Vagina (tissue), 2 donors: ENCODE measurements at regions of chr19 and their contacts with region 1.

Region 1: DNA sequence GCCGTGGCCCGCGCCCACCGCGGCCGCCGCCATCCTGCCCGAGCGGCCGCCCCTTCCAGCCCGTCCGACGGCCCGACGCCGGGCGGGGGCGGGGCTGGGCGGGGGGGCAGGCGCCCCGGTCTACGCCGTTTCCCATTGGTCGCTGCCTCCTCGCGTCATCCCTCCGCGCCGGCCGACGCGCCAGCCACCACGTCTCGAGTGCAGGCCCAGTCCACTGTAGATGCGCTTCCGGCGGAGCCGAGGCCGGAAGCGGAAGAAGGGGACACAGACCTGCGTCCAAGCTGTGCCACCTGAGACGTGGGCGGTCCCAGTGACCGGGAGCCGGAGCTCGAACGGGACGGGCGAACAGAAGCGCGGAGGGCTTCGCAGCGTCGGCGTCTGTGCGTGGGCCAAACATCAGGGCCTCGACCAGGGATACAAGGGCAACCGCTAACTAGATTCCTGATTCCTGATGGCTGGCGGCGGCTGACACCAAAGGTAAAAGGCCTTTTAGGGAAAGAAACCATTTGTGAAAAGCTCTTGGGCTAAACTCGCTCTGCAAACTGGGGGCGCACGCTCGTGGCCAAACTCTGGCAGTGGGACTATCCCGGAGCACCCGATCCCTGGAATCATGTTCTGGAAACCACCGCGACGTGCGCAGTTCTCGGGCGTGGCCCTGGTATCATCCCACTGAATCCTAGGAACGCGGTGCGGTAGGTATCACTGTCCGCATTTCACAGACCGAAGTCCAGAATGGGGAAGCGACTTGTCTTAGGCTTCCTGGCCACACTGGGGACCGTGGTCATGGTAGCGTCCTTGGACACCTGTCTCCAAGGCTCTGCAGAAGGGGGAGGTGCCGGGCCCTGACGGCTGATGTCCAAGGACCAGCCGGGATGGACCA is at the start of gene SLC35E1:
- DNase-seq: peak in 1 of 2 donors; percentile 96
- H3K4me3 ChIP-seq: peak within 1 kb of the TSS; percentile 62 to 80
- H3K27ac ChIP-seq: peak within 1 kb of the TSS; percentile 68
- H3K4me1 ChIP-seq: peaks cover 47% of the 10 kb centered on the region
- H3K27me3 ChIP-seq: no peaks in the 10 kb centered on the region
- CTCF ChIP-seq: peak in 1 of 3 experiments; percentile 4
- POLR2A ChIP-seq: peak in 1 of 2 donors; percentile 57
- total RNA-seq, gene SLC35E1: 21.6 TPM

Region 2: GRCh38 chr19:16618248-16618647 is 45.7 kb after region 1 on chr19:
- intact Hi-C with region 1: no loop called
- DNase-seq: no peak
- H3K4me3 ChIP-seq: no peak overlapping the region
- H3K27ac ChIP-seq: no peak overlapping the region
- H3K4me1 ChIP-seq: peaks cover 72% of the 10 kb centered on the region
- H3K27me3 ChIP-seq: no peaks in the 10 kb centered on the region
- CTCF ChIP-seq: no peak
- POLR2A ChIP-seq: no peak

Region 3: GRCh38 chr19:16628183-16628983 is 55.8 kb after region 1 on chr19 and contains the start of gene MED26:
- intact Hi-C with region 1: loop called (anchors 2 kb)
- DNase-seq: peak in 1 of 2 donors; percentile 92
- H3K4me3 ChIP-seq: peak within 1 kb of the TSS; percentile 97 to 100
- H3K27ac ChIP-seq: peak within 1 kb of the TSS; percentile 93
- H3K4me1 ChIP-seq: peaks cover 34% of the 10 kb centered on the region
- H3K27me3 ChIP-seq: no peaks in the 10 kb centered on the region
- CTCF ChIP-seq: no peak
- POLR2A ChIP-seq: peak in 1 of 2 donors; percentile 60
- total RNA-seq, gene MED26: 11.3 TPM

Region 4: DNA sequence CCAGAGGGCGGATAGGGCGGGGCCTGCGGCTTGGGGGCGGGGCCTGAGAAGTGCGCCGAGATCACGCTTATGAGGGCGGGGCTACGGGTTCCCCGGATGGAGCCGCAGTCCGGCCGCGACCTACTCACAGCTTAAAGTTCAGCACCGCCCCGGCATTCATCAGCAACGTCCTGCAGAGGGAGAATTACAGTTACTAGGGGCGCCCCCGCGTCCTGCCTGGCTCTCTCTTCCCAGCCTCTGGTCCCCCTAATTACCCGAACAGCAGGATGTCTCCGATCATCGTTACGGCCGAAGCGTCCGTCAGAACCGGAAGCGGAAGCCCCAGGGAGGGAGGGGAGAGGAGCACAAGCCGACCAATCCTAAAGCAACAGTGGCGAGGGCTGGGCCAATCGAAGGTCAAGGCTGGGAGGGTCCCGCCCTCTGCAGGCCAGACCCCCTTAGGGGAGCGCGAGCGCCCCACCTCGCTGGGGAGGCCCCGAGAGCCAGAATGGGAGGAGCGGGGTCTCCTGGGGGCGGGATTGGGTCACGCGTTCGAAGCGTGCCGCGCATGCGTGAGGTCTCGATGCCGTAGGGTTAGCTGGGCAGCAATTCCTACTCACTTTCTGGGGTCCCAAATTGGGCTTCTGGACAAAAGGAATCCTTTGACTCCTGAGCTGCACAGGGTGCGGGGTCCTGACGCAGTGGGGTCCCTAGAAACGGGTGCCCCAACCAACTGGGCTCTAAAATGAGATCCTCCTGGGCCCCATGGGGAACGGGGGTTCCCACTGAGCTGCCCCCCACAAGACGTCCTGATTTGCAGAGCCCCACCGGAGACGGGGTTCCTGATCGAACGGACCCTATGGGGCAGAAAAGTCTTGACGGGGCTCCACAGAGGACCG is 87.5 kb after region 1 on chr19 and contains the start of gene SMIM7:
- intact Hi-C with region 1: loop called (anchors 5 kb)
- DNase-seq: peak; percentile 99
- H3K4me3 ChIP-seq: peak within 1 kb of the TSS; percentile 59 to 93
- H3K27ac ChIP-seq: peak within 1 kb of the TSS; percentile 80
- H3K4me1 ChIP-seq: peaks cover 41% of the 10 kb centered on the region
- H3K27me3 ChIP-seq: no peaks in the 10 kb centered on the region
- CTCF ChIP-seq: no peak
- POLR2A ChIP-seq: peak in 1 of 2 donors; percentile 67
- total RNA-seq, gene SMIM7: 75.1 TPM